ENCODE measurements at regions of chr9 and their contacts with region 1.

Region 1: GRCh38 chr9:78121488-78121887 is 89.9 kb upstream of the GNAQ start:
- DNase-seq: peak; percentile 20 to 81 (median 50)
- ATAC-seq: no peak
- H3K4me3 ChIP-seq: no peak overlapping the region
- H3K4me3 Mint-ChIP-seq: no peak overlapping the region
- H3K27ac ChIP-seq: no peak overlapping the region
- H3K27ac Mint-ChIP-seq: peak overlapping the region; percentile 85
- H3K4me1 ChIP-seq: peaks cover 19% of the 10 kb centered on the region
- H3K4me1 Mint-ChIP-seq: peaks cover 62% of the 10 kb centered on the region
- H3K27me3 ChIP-seq: no peaks in the 10 kb centered on the region
- H3K27me3 Mint-ChIP-seq: no peaks in the 10 kb centered on the region
- CTCF ChIP-seq: peak; percentile 80

Region 2: DNA sequence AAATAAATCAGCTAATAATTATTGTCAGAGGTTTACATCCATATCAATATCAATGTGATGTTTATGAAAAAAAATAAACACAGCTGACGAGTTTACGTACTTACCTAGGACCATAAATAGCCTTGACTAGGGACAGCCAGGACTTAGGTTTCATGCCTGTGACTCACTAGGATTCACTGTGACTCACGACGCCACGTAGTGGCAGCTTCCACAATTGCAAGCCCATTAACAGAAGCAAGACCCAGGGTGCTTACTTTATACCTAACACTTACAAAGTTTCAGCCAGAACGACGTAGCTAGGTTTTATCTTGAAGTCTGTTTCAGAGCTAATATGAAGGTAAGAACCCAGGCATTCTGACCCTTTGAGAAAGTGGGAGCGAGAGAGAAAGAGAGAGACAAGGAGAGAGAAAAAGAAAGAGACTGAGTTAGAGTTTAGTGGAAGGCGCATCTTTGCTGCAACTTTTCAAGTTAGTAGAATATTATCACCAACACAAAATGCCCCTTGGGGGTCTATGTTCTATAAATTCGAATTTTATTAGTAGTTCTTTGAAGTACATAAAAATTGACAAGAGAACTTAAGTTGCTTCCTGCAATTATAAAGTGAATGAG is 664.6 kb before region 1 on chr9:
- CTCF ChIA-PET with region 1: no interaction called
- POLR2A ChIA-PET with region 1: no interaction called
- intact Hi-C with region 1: loop called in 1 of 2 experiments (anchors 2 kb)
- DNase-seq: peak; percentile 62 to 86 (median 76)
- ATAC-seq: peak; percentile 81
- H3K4me3 ChIP-seq: no peak overlapping the region
- H3K4me3 Mint-ChIP-seq: no peak overlapping the region
- H3K27ac ChIP-seq: no peak overlapping the region
- H3K27ac Mint-ChIP-seq: no peak overlapping the region
- H3K4me1 ChIP-seq: peaks cover 8% of the 10 kb centered on the region
- H3K4me1 Mint-ChIP-seq: peaks cover 29% of the 10 kb centered on the region
- H3K27me3 ChIP-seq: no peaks in the 10 kb centered on the region
- H3K27me3 Mint-ChIP-seq: no peaks in the 10 kb centered on the region
- CTCF ChIP-seq: peak; percentile 80

Region 3: GRCh38 chr9:77793904-77794303 is 327.6 kb before region 1 on chr9:
- CTCF ChIA-PET with region 1: no interaction called
- POLR2A ChIA-PET with region 1: no interaction called
- intact Hi-C with region 1: no loop called
- DNase-seq: no peak
- ATAC-seq: no peak
- H3K4me3 ChIP-seq: no peak overlapping the region
- H3K4me3 Mint-ChIP-seq: no peak overlapping the region
- H3K27ac ChIP-seq: no peak overlapping the region
- H3K27ac Mint-ChIP-seq: no peak overlapping the region
- H3K4me1 ChIP-seq: no peaks in the 10 kb centered on the region
- H3K4me1 Mint-ChIP-seq: peaks cover 8% of the 10 kb centered on the region
- H3K27me3 ChIP-seq: no peaks in the 10 kb centered on the region
- H3K27me3 Mint-ChIP-seq: no peaks in the 10 kb centered on the region
- CTCF ChIP-seq: no peak

Region 4: DNA sequence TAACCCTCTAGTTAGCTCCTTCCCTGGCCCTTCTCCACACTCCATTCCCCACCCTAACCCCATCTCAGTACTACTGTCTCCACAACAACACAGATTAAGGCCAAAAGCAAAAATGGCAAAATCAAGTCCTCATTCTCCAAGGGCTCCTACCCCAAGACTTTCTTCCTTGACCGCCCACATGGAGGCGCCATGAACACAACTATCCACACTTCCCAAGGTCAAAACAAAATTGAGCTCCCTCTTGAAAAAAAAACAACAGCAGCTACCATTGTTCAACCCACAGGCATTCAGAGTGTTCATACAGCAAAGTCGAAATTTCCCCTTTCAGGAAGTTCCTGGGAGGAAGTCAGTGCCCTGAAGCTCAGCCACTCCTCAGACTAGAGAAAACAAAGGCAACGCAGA is 144.3 kb before region 1 on chr9:
- CTCF ChIA-PET with region 1: interaction called, 4 read pairs
- POLR2A ChIA-PET with region 1: interaction called, 9 read pairs
- intact Hi-C with region 1: loop called (anchors 2 to 5 kb)
- DNase-seq: peak; percentile 9 to 79 (median 43)
- ATAC-seq: peak; percentile 65
- H3K4me3 ChIP-seq: no peak overlapping the region
- H3K4me3 Mint-ChIP-seq: peak overlapping the region; percentile 54
- H3K27ac ChIP-seq: no peak overlapping the region
- H3K27ac Mint-ChIP-seq: peak overlapping the region; percentile 40
- H3K4me1 ChIP-seq: peaks cover 37% of the 10 kb centered on the region
- H3K4me1 Mint-ChIP-seq: peaks cover 69% of the 10 kb centered on the region
- H3K27me3 ChIP-seq: no peaks in the 10 kb centered on the region
- H3K27me3 Mint-ChIP-seq: no peaks in the 10 kb centered on the region
- CTCF ChIP-seq: peak; percentile 44

Region 5: DNA sequence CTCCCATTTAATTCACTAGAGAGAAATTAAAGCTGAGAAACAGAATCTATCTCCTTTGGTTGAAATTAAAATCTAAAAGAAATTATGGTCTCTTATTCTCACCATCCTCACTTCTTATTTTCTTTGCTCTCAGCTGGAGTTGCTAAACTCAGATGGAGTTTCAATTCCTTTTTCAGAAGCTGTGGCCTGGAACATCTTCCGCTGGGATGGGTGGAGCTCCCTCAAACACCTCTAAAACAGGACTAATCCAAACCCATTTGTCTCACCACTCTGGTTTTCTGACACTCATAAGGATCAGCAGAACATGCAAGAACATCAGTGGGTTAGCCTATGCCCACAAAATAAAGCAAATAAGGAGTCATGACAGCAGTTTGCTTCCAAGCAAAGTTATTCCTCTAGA is 74.8 kb after region 1 on chr9:
- CTCF ChIA-PET with region 1: no interaction called
- POLR2A ChIA-PET with region 1: interaction called, 15 read pairs
- intact Hi-C with region 1: loop called in 1 of 2 experiments (anchors 5 kb)
- DNase-seq: no peak
- ATAC-seq: no peak
- H3K4me3 ChIP-seq: no peak overlapping the region
- H3K4me3 Mint-ChIP-seq: no peak overlapping the region
- H3K27ac ChIP-seq: no peak overlapping the region
- H3K27ac Mint-ChIP-seq: no peak overlapping the region
- H3K4me1 ChIP-seq: peaks cover 10% of the 10 kb centered on the region
- H3K4me1 Mint-ChIP-seq: peaks cover 28% of the 10 kb centered on the region
- H3K27me3 ChIP-seq: no peaks in the 10 kb centered on the region
- H3K27me3 Mint-ChIP-seq: no peaks in the 10 kb centered on the region
- CTCF ChIP-seq: no peak

Measured in CD4-positive, alpha-beta T cell (primary cell).